ENCODE measurements at regions of chr5 and their contacts with region 1.

Region 1: GRCh38 chr5:103475629-103476240 is 86.9 kb downstream of the NUDT12 start:
- DNase-seq: peak; percentile 32
- H3K4me3 ChIP-seq: no peak overlapping the region
- H3K27ac ChIP-seq: no peak overlapping the region
- H3K4me1 ChIP-seq: no peaks in the 10 kb centered on the region
- H3K27me3 ChIP-seq: no peaks in the 10 kb centered on the region
- CTCF ChIP-seq: peak; percentile 56 to 61

Region 2: DNA sequence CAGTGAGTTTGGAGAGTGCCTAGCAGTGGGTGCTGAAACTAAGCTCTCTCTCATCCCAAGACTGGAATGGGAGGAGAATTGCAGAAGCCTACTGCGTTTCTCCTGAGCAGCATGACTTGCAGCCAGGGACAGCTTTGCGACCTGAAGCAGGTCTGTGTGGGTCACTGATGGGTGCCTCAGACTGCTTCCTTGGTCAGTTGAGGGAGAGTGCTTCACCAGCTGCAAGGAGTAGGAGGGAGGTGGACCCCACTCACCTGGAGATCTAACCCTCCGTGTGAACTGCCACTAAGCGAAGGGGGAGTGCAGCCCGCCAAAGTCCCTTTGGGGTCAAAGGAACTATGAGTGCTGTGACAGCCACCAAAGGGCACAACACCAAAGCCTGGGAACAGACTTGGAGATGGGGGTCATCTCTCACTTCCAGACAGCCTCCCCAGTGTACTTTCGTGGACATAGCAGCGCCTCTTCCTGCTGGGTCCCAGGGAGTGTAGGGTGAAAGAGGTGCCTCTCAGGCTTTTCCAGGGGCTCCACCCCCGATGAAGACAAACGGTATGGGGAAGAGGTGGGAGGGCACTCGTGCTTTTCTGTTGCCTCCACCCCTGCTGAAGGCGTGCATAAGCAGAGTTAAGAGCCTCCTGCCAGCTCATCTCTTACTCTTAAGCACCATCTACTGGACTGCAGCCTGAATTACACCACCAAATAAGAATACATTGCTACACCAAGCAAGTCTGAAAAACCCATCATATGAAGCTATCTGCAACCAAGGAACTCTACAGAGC is 251.4 kb before region 1 on chr5:
- CTCF ChIA-PET with region 1: no interaction called
- dilution Hi-C with region 1: no loop called
- in situ Hi-C with region 1: no loop called
- intact Hi-C with region 1: loop called (anchors 2 kb)
- DNase-seq: peak; percentile 55
- H3K4me3 ChIP-seq: no peak overlapping the region
- H3K27ac ChIP-seq: no peak overlapping the region
- H3K4me1 ChIP-seq: no peaks in the 10 kb centered on the region
- H3K27me3 ChIP-seq: no peaks in the 10 kb centered on the region
- CTCF ChIP-seq: peak; percentile 66 to 72

Region 3: DNA sequence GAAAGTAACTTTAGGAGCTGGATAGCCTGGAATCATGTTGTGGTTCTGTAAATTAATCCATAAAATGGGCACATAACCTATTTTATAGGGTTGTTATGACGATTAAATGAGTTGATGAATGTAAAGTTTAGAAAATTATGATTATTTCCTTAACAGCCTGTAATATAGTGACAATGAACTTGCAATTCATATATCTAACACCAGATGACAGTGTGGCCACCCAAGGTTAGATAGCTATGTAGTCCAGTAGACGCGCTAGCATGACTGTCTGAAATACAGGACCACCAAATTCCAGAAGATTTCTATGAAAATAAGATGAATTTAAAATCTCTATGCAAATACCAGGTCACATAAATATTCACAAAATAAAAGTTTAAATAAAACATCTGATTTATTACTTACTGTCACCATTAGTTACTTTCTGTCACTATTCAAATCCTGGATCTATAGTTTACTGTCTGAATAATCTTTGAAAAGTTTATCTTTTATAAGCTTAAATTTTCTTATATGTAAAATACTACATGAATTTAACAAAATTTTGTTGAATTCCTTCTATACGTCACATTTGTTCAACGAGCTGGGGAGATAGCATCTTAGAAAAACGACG is 243.2 kb before region 1 on chr5:
- CTCF ChIA-PET with region 1: no interaction called
- dilution Hi-C with region 1: no loop called
- in situ Hi-C with region 1: loop called (anchors 5 kb)
- intact Hi-C with region 1: loop called (anchors 1 kb)
- DNase-seq: peak; percentile 11
- H3K4me3 ChIP-seq: no peak overlapping the region
- H3K27ac ChIP-seq: no peak overlapping the region
- H3K4me1 ChIP-seq: no peaks in the 10 kb centered on the region
- H3K27me3 ChIP-seq: no peaks in the 10 kb centered on the region
- CTCF ChIP-seq: peak; percentile 88 to 96

Region 4: GRCh38 chr5:103258368-103258956 is 217.3 kb before region 1 on chr5 and contains the start of gene MACIR:
- CTCF ChIA-PET with region 1: interaction called, 11 read pairs
- dilution Hi-C with region 1: no loop called
- in situ Hi-C with region 1: no loop called
- intact Hi-C with region 1: no loop called
- DNase-seq: peak; percentile 98
- H3K4me3 ChIP-seq: peak within 1 kb of the TSS; percentile 86 to 88 (median 88)
- H3K27ac ChIP-seq: peak within 1 kb of the TSS; percentile 35
- H3K4me1 ChIP-seq: peaks cover 5% of the 10 kb centered on the region
- H3K27me3 ChIP-seq: no peaks in the 10 kb centered on the region
- CTCF ChIP-seq: no peak
- total RNA-seq, gene MACIR: 7.2 to 7.5 TPM

Region 5: DNA sequence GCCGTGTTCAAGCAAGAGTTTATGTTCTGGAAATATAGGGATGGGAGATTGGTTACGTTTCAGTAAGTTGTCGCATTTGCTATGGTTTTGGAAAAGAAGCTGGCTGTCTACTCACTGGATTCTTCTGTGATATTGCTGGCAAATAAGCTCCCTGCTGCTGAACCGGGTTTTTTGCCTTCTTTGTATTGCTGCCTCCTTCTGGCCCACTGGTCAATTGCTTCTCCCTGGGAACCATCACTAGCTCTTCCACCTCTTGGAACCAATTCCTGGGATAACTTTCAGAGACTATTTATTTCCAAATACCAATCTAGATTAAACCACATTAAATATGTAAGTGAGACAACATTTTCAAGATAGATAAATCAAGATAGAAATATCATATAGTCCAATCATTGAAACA is 43.8 kb after region 1 on chr5:
- CTCF ChIA-PET with region 1: no interaction called
- dilution Hi-C with region 1: no loop called
- in situ Hi-C with region 1: no loop called
- intact Hi-C with region 1: no loop called
- DNase-seq: no peak
- H3K4me3 ChIP-seq: no peak overlapping the region
- H3K27ac ChIP-seq: no peak overlapping the region
- H3K4me1 ChIP-seq: peaks cover 6% of the 10 kb centered on the region
- H3K27me3 ChIP-seq: peaks cover 3% of the 10 kb centered on the region
- CTCF ChIP-seq: peak; percentile 5 to 43

Measured in mammary epithelial cell (primary cell).